GM10248 (cell line): ENCODE measurements at regions of chr7 and their contacts with region 1.

Region 1: DNA sequence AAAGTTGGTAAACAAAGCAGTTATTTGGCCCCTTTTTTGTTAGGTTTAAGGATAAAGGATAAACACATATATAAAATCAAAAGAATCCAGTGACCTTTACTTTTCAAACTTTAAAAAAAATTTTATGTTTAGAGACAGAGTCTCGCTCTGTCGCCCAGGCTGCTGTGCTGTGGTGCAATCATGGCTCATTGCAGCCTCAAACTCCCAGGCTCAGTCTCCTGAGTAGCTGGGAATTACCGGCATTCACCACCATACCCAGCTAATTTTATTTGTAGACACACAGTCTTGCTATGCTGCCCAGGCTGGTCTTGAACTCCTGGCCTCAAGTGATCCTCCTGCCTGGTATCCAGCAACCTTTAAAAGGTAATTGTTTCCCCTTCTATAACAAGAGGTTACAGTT is 31.3 kb downstream of the GNA12 start:
- DNase-seq: no peak
- CTCF ChIP-seq: no peak

Region 2: GRCh38 chr7:2567679-2568278 is 245.1 kb before region 1 on chr7:
- CTCF ChIA-PET with region 1: no interaction called
- POLR2A ChIA-PET with region 1: no interaction called
- DNase-seq: peak; percentile 47
- CTCF ChIP-seq: peak; percentile 55

Region 3: DNA sequence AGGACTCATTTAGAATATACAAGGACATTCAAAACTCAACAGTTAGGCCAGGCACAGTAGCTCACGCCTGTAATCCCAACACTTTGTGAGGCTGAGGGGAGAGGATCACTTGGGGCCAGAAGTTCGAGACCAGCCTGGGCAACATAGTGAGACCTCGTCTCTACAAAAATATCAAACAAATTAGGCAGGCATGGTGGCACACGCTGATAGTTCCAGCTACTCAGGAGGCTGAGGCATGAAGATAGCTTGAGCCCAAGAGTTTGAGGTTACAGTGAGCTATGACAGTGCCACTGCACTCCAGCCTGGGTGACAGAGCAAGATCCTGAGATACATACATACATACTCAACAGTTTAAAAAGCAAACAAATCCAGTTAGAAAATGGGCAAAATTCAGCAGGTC is 13.6 kb before region 1 on chr7:
- CTCF ChIA-PET with region 1: interaction called, 10 read pairs
- POLR2A ChIA-PET with region 1: no interaction called
- DNase-seq: no peak
- CTCF ChIP-seq: no peak